Aorta (tissue), 5 donors: ENCODE measurements at regions of chr12 and their contacts with region 1.

Region 1: DNA sequence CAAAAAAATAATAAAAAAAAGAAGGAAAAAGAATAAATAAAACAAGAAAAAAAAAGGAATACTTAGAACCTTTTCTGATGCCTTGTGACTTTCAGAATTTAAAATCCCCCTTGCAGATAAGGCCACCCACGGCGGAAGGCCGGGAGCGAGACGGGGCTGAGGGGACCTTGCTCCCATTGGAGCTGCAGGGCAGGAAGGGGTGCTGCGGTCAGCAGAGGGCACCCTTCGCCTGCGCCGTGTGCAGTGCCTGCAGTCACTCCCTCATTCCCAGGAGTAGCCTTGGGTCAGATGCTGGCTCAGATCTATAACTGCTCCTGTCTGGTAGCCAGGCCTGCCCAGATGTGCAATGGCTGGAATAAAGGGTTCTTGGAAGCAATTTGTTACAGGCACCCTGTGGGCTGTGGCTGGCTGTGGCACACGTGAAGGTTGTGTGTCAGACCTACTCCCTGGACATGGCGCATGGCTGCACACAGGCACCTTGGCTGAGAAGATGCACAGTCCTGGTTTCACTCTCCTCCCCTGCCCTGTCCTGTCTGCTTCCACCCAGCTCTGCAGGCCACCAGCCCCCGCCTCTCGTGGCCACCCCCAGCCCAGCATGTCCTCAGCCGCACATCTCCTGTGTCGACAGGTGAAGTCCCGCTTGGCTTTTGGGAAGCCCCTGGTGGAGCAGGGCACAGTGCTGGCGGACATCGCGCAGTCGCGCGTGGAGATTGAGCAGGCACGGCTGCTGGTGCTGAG is 13.4 kb upstream of the ALDH2 start:
- DNase-seq: peak; percentile 74 to 89
- ATAC-seq: peak; percentile 86
- H3K4me3 ChIP-seq: no peak overlapping the region
- H3K27ac ChIP-seq: no peak overlapping the region
- H3K4me1 ChIP-seq: peaks cover 0 to 2% of the 10 kb centered on the region in 2 donors
- H3K27me3 ChIP-seq: no peaks in the 10 kb centered on the region

Region 2: GRCh38 chr12:111692575-111693210 is 60.6 kb before region 1 on chr12:
- intact Hi-C with region 1: no loop called
- DNase-seq: no peak
- ATAC-seq: no peak
- H3K4me3 ChIP-seq: no peak overlapping the region
- H3K27ac ChIP-seq: no peak overlapping the region
- H3K4me1 ChIP-seq: no peaks in the 10 kb centered on the region
- H3K27me3 ChIP-seq: no peaks in the 10 kb centered on the region

Region 3: GRCh38 chr12:111792155-111792855 is 39.0 kb after region 1 on chr12:
- intact Hi-C with region 1: loop called in 1 of 2 experiments (anchors 5 kb)
- DNase-seq: peak; percentile 76 to 88
- ATAC-seq: peak; percentile 86
- H3K4me3 ChIP-seq: no peak overlapping the region
- H3K27ac ChIP-seq: no peak overlapping the region
- H3K4me1 ChIP-seq: no peaks in the 10 kb centered on the region
- H3K27me3 ChIP-seq: no peaks in the 10 kb centered on the region

Region 4: DNA sequence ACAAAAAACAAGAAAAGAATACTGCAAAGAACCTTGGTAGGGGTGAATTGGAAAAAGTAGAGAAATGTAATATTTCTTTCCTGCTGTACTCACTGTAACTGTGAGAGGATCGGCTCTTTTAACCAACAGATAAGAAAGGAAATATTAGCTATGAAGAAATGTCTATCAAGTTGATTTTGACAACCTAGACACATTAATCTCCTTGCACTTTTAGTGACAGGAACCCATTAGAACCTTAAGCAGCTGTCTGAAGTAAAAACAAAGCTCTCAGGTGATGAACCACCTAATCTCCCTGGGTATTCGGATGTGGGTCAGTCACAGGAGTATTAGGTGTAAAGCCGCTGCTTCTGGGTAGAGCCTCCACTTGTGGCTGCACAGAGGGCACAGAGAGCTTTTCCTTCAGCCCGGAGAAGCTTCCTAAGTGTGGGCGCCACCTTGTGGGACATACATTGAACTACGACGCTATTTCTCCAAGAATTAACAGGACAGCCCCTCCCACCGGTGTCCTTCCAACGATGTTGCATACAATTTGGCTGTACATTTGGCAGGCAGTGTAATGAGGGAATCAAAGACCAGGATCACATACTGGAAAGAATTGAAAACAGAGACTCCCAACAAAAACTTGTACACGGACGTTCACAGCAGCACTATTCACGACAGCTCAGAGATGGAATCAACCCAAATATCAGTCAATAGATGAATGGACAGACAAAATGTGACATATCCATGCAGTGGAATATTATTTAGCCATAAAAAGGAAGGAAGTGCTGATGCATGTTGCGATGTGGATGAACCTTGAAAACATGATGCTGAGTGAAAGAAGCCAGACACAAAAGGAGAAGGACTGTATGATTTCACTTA is 59.8 kb after region 1 on chr12:
- intact Hi-C with region 1: loop called (anchors 1 to 5 kb)
- DNase-seq: peak; percentile 77 to 83
- ATAC-seq: peak; percentile 95
- H3K4me3 ChIP-seq: no peak overlapping the region
- H3K27ac ChIP-seq: no peak overlapping the region
- H3K4me1 ChIP-seq: no peaks in the 10 kb centered on the region
- H3K27me3 ChIP-seq: no peaks in the 10 kb centered on the region